H1 (cell line): ENCODE measurements at regions of chr3 and their contacts with region 1.

Region 1: DNA sequence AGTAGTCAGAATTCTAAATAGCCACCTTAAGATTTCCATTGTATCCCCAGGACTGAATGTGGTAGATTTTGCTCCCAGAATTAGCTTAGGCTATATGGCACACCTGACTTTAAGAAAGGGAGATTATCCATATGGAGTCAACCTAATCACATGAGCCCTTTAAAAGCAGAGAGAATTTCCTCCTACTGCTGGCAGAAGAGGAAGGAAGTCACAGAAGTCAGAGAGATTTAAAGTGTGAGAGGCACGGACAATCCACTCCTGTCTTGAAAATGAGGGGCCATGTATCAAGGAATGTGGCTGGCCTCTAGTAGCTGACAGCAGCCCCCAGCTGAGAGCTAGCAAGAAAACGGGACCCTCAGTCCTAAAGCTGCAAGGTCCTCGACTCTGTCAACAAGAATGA is 26.8 kb downstream of the LRRC31 start:
- DNase-seq: no peak
- H3K4me3 ChIP-seq: no peak overlapping the region
- H3K27ac ChIP-seq: no peak overlapping the region
- H3K4me1 ChIP-seq: no peaks in the 10 kb centered on the region
- H3K27me3 ChIP-seq: no peaks in the 10 kb centered on the region
- CTCF ChIP-seq: no peak
- EP300 ChIP-seq: no peak
- POLR2A ChIP-seq: no peak
- RAD21 ChIP-seq: no peak

Region 2: GRCh38 chr3:169818316-169818715 is 24.6 kb before region 1 on chr3:
- CTCF ChIA-PET with region 1: no interaction called
- POLR2A ChIA-PET with region 1: no interaction called
- DNase-seq: no peak
- H3K4me3 ChIP-seq: no peak overlapping the region
- H3K27ac ChIP-seq: no peak overlapping the region
- H3K4me1 ChIP-seq: peaks cover 2 to 4% (median 3%) of the 10 kb centered on the region in 4 experiments; a peak in 4 of 7 replicates
- H3K27me3 ChIP-seq: peaks cover 0 to 6% (median 3%) of the 10 kb centered on the region in 4 experiments
- CTCF ChIP-seq: no peak
- EP300 ChIP-seq: no peak
- POLR2A ChIP-seq: no peak
- RAD21 ChIP-seq: no peak

Region 3: GRCh38 chr3:169863458-169863899 is 20.5 kb after region 1 on chr3:
- CTCF ChIA-PET with region 1: interaction called, 10 read pairs
- POLR2A ChIA-PET with region 1: no interaction called
- DNase-seq: peak; percentile 58 to 87
- H3K4me3 ChIP-seq: no peak overlapping the region
- H3K27ac ChIP-seq: no peak overlapping the region
- H3K4me1 ChIP-seq: peaks cover 2 to 5% (median 4%) of the 10 kb centered on the region in 4 experiments; a peak in 5 of 7 replicates
- H3K27me3 ChIP-seq: no peaks in the 10 kb centered on the region
- CTCF ChIP-seq: peak; percentile 62 to 95 (median 78)
- EP300 ChIP-seq: no peak
- POLR2A ChIP-seq: no peak
- RAD21 ChIP-seq: peak; percentile 93 to 96